ENCODE measurements at regions of chr10 and their contacts with region 1.

Region 1: DNA sequence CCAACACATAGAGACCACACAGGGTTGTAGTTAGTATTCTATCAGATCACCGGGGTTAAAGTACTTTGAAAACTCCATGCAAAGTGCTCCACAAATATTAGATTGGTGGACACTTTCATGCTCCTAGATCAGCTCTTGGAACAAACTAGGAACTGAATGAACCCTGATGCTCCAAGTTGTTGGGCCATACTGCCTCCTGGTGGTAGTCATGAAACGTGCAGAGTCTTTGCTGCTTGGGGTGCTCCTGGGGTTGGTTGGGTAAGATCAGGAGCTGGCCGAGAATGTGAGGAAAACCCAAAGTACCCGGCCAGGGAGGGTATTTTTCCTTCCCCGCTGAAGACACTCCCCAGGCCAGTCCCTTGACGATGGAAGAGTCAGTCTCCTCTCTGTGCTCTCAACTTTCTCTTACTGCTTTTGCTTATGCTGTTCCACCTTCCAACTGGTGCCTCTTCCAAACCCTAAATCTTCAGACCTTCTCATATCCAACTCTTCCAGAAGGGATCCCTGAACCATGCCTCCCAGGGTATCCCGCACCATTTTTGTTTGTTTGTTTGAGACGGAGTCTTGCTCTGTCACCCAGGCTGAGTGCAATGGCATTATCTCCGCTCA is 920 bp upstream of the RPEL1 start:
- DNase-seq: peak; percentile 66
- H3K4me3 ChIP-seq: no peak overlapping the region
- H3K27ac ChIP-seq: no peak overlapping the region
- H3K27me3 ChIP-seq: peaks cover 2% of the 10 kb centered on the region
- CTCF ChIP-seq: peak; percentile 93

Region 2: GRCh38 chr10:102835007-102835482 is 409.7 kb before region 1 on chr10:
- CTCF ChIA-PET with region 1: interaction called, 10 read pairs
- POLR2A ChIA-PET with region 1: no interaction called
- DNase-seq: peak; percentile 59
- H3K4me3 ChIP-seq: no peak overlapping the region
- H3K27ac ChIP-seq: no peak overlapping the region
- H3K27me3 ChIP-seq: peaks cover 2% of the 10 kb centered on the region
- CTCF ChIP-seq: peak; percentile 92

Region 3: GRCh38 chr10:103083266-103083976 is 161.3 kb before region 1 on chr10:
- CTCF ChIA-PET with region 1: interaction called, 13 read pairs
- POLR2A ChIA-PET with region 1: no interaction called
- DNase-seq: no peak
- H3K4me3 ChIP-seq: no peak overlapping the region
- H3K27ac ChIP-seq: no peak overlapping the region
- H3K27me3 ChIP-seq: no peaks in the 10 kb centered on the region
- CTCF ChIP-seq: no peak

Region 4: DNA sequence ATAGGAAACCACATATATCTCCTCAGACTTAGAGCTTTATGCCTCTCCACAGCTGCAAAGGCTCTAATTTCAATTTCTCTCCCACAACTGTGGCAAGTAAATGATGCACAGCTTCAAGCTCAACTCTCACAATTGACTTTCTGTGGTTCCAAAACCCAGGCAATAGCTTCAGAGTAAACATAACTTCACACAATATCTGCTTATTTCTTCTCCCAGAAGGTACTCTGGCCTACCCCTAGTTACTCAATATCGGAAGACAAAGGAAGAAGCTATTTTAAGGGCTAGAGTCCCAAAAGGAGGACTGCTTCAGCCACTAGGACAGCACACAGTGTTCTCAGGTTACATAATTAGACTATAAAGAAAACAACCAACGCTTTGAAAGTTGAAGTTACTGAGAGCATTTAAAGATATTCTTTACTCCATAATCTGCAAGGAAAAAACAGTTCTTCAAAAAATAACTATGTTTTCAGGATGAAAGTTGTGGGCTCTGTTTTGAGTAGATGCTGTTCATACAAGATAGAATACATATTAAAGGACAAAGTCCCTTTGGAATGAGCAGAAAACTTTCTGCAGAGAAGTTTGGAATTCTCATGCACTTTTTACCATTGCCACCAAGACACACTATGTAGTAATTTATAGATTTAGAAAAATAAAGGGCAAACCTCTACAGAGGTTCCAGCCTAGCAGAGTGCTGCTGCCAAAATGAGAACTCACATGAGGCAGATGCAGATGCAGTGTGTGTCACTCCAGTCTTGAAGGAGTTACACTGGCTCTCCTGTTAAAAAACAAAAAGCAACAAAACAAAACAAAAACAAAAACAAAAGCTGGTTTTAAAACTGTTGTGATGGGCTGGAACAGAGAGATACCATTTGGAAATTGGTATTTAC is 133.5 kb before region 1 on chr10:
- CTCF ChIA-PET with region 1: interaction called, 22 read pairs
- POLR2A ChIA-PET with region 1: no interaction called
- DNase-seq: no peak
- H3K4me3 ChIP-seq: no peak overlapping the region
- H3K27ac ChIP-seq: no peak overlapping the region
- H3K27me3 ChIP-seq: no peaks in the 10 kb centered on the region
- CTCF ChIP-seq: no peak

Region 5: GRCh38 chr10:103153302-103154197 is 91.2 kb before region 1 on chr10:
- CTCF ChIA-PET with region 1: interaction called, 27 read pairs
- POLR2A ChIA-PET with region 1: interaction called, 5 read pairs
- DNase-seq: no peak
- H3K4me3 ChIP-seq: peak overlapping the region; percentile 33; the same call in 1 of the 2 replicates
- H3K27ac ChIP-seq: peak overlapping the region; percentile 74
- H3K27me3 ChIP-seq: no peaks in the 10 kb centered on the region
- CTCF ChIP-seq: no peak

Region 6: DNA sequence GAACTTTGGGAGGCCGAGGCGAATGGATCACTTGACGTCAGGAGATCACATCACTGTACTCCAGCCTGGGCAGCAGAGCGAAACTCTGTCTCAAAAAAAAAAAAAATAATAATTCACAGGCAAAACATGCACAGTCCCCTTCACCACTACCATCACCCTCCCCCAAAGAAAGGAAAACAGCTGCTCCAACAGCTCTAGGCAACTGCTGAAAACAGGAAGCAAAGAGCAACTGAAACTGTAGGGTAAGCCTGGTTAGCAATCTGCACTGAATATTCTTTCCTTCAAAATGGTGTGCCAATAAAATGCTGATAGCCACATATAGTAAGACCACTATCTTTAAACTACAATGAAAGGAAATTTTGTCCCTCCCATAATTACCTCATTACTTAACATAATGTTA is 63.5 kb before region 1 on chr10:
- CTCF ChIA-PET with region 1: interaction called, 14 read pairs
- POLR2A ChIA-PET with region 1: no interaction called
- DNase-seq: no peak
- H3K4me3 ChIP-seq: no peak overlapping the region
- H3K27ac ChIP-seq: no peak overlapping the region
- H3K27me3 ChIP-seq: no peaks in the 10 kb centered on the region
- CTCF ChIP-seq: no peak

Region 7: GRCh38 chr10:103231047-103231551 is 13.7 kb before region 1 on chr10:
- CTCF ChIA-PET with region 1: interaction called, 14 read pairs
- POLR2A ChIA-PET with region 1: interaction called, 4 read pairs
- DNase-seq: peak; percentile 91
- H3K4me3 ChIP-seq: no peak overlapping the region
- H3K27ac ChIP-seq: peak overlapping the region; percentile 99
- H3K27me3 ChIP-seq: no peaks in the 10 kb centered on the region
- CTCF ChIP-seq: no peak

Region 8: GRCh38 chr10:103504181-103504783 is 259.5 kb after region 1 on chr10:
- CTCF ChIA-PET with region 1: no interaction called
- POLR2A ChIA-PET with region 1: no interaction called
- DNase-seq: peak; percentile 70
- H3K4me3 ChIP-seq: no peak overlapping the region
- H3K27ac ChIP-seq: no peak overlapping the region
- H3K27me3 ChIP-seq: peaks cover 78% of the 10 kb centered on the region
- CTCF ChIP-seq: no peak

Region 9: GRCh38 chr10:104197364-104197763 is 952.6 kb after region 1 on chr10:
- CTCF ChIA-PET with region 1: no interaction called
- POLR2A ChIA-PET with region 1: no interaction called
- DNase-seq: no peak
- H3K4me3 ChIP-seq: no peak overlapping the region
- H3K27ac ChIP-seq: no peak overlapping the region
- H3K27me3 ChIP-seq: peaks cover 18% of the 10 kb centered on the region
- CTCF ChIP-seq: no peak